ENCODE measurements at regions of chr17 and their contacts with region 1.

Region 1: GRCh38 chr17:57114085-57114673 is 29.1 kb downstream of the AKAP1 start:
- DNase-seq: no peak
- H3K4me3 ChIP-seq: no peak overlapping the region
- H3K27ac ChIP-seq: peak overlapping the region; percentile 8 to 61 (median 31)
- H3K4me1 ChIP-seq: peaks cover 30 to 44% (median 41%) of the 10 kb centered on the region in 4 donors
- H3K27me3 ChIP-seq: no peaks in the 10 kb centered on the region
- CTCF ChIP-seq: peak; percentile 71 to 93 (median 78)
- EP300 ChIP-seq: no peak
- POLR2A ChIP-seq: no peak

Region 2: DNA sequence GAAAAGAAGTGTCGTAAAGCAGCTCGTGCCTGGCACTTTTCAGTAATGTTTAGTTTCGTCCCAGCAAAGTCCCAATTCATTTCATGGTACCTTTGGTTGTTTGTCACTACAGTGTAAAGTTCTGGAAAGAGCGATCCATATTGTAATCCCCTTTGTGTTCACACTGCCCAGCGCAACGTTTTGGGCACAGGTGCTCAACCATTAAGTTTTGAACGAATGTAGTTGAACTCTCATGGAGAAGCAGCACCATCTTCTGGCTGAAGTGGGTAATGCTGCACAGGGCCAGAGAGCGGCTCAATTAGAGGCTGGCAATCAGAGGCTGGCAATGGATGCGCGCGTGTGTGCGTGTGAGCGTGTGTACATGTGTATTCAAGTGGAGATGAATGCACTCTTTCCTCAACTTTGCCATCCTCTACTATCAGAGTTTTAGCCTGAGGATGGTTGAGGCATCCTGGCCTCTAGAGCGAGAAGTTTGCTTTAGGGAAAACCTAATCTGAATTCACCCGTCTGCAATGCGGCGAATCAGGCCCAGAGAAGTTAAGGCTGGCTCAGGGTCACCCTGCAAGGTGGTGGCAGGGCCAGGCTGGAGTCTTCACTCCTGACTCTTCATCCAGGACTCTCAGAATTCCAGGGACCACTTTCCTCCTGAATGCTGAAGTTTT is 998.9 kb after region 1 on chr17:
- intact Hi-C with region 1: loop called (anchors 10 kb)
- DNase-seq: peak; percentile 95
- H3K4me3 ChIP-seq: no peak overlapping the region
- H3K27ac ChIP-seq: no peak overlapping the region
- H3K4me1 ChIP-seq: peaks cover 0 to 7% (median 4%) of the 10 kb centered on the region in 4 donors
- H3K27me3 ChIP-seq: peaks cover 0 to 8% (median 0%) of the 10 kb centered on the region in 4 donors
- CTCF ChIP-seq: peak; percentile 93 to 99 (median 95)
- EP300 ChIP-seq: no peak
- POLR2A ChIP-seq: no peak